Panc1 (cell line): ENCODE measurements at regions of chr15 and their contacts with region 1.

Region 1: DNA sequence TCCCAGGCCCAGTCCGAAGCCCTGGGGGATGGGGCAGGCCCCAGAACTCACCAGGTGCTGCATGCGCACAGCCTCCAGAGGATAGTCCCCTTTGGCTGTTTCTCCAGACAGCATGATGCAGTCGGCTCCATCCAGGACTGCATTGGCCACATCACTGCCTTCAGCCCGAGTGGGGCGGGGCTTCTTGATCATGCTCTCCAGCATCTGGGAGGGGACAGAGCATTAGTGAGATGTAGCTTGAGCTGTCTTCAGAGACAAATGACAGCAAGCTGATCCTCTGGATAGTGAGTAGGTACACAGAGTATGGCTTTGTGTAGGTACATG is 9.1 kb upstream of the GRAMD2A start:
- DNase-seq: no peak
- ATAC-seq: peak; percentile 19
- H3K4me3 ChIP-seq: no peak overlapping the region
- H3K27ac ChIP-seq: no peak overlapping the region
- H3K4me1 ChIP-seq: peaks cover 11% of the 10 kb centered on the region
- H3K27me3 ChIP-seq: no peaks in the 10 kb centered on the region
- CTCF ChIP-seq: no peak

Region 2: GRCh38 chr15:72222259-72222832 is 15.7 kb after region 1 on chr15:
- CTCF ChIA-PET with region 1: interaction called, 4 read pairs
- POLR2A ChIA-PET with region 1: interaction called, 13 read pairs
- in situ Hi-C with region 1: no loop called
- intact Hi-C with region 1: no loop called
- DNase-seq: no peak
- ATAC-seq: peak; percentile 54
- H3K4me3 ChIP-seq: no peak overlapping the region
- H3K27ac ChIP-seq: peak overlapping the region; percentile 30
- H3K4me1 ChIP-seq: peaks cover 55% of the 10 kb centered on the region
- H3K27me3 ChIP-seq: no peaks in the 10 kb centered on the region
- CTCF ChIP-seq: no peak

Region 3: DNA sequence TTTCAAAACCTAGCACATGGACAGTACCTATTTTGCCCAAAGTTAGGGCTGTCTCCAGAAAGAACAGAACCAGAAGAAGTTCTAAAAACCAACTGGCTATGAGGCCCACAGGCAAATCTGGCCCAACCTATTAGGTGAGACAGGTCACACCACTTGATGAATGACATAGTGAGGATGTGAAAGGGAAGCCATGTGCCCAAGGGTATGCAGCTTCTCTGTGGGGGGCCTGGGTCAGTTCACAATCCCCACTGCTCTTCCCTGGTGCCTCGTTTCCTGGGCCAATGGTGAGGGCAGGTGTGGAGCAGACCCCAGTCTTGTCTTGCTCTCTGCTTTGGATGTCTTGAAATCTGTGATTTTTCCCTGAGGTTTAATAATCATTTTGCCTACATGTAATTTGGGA is 1537.7 kb after region 1 on chr15:
- CTCF ChIA-PET with region 1: no interaction called
- POLR2A ChIA-PET with region 1: interaction called, 16 read pairs
- in situ Hi-C with region 1: no loop called
- intact Hi-C with region 1: no loop called
- DNase-seq: no peak
- ATAC-seq: no peak
- H3K4me3 ChIP-seq: no peak overlapping the region
- H3K27ac ChIP-seq: no peak overlapping the region
- H3K4me1 ChIP-seq: peaks cover 16% of the 10 kb centered on the region; the same call in 1 of the 2 replicates
- H3K27me3 ChIP-seq: no peaks in the 10 kb centered on the region
- CTCF ChIP-seq: no peak